A549 (cell line): ENCODE measurements at regions of chr17 and their contacts with region 1.

Region 1: DNA sequence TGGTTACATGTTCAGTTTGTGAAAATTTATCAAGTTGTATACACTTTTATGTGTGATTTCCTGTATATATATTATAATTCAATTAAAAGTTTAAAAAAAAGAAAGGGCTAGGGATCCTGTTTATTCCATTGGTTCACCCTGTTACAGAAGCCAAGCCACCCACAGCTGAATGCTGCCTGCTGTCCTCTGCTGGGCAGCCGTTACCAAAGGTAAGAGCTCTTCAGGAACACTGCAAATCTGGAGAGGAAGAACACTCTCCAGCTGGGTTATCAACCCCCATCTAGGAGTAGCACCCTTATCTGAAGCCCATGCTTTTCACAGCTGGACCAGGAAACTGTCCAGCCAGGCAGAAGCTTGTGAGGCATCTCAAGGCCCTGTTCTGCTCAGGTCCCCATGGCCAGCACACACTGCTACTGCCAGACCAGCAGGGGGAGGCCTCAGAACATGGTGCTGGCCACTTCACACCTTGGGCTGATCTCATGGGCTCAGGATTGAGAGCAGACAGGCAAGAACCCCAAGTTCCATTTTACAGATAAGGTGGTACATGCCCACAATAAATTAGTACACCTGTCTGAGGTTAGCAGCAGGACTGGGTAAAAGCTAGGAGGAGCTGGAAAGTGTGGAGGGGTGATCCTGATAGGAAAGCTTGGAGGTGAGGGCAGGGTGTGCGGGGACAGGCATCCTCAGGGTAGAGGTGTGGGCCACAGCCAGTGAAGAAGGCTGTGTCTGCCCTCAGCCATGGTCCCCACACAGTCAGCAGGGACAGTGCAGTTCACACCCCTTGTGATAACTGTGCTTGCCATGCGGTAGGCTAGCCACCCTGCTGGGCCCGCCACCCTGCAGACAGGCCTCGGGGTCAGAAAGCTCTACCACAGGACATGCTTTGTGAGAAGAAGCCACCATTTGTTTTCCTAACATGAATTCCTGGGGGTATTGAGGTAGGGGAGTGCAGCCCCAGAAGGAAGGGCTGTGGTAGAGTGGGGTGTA is 54.3 kb upstream of the SREBF1 start:
- DNase-seq: peak; percentile 88 to 91
- ATAC-seq: peak; percentile 94 to 98
- H3K4me3 ChIP-seq: no peak overlapping the region
- H3K27ac ChIP-seq: peak overlapping the region in 1 of 2 experiments; percentile 26; a peak in 3 of 6 replicates
- H3K4me1 ChIP-seq: 0 out of 3 replicates have a peak, but pooled peaks cover under 1% of the 10 kb centered on the region
- CTCF ChIP-seq: peak; percentile 94
- EP300 ChIP-seq: no peak
- POLR2A ChIP-seq: no peak
- RAD21 ChIP-seq: peak; percentile 98 to 100

Region 2: GRCh38 chr17:17636272-17636885 is 254.7 kb before region 1 on chr17:
- CTCF ChIA-PET with region 1: no interaction called
- POLR2A ChIA-PET with region 1: no interaction called
- DNase-seq: no peak
- ATAC-seq: no peak
- H3K4me3 ChIP-seq: no peak overlapping the region
- H3K27ac ChIP-seq: no peak overlapping the region
- H3K4me1 ChIP-seq: no peaks in the 10 kb centered on the region
- CTCF ChIP-seq: no peak
- EP300 ChIP-seq: no peak
- POLR2A ChIP-seq: no peak
- RAD21 ChIP-seq: no peak

Region 3: GRCh38 chr17:17868641-17869522 is 22.2 kb before region 1 on chr17:
- CTCF ChIA-PET with region 1: interaction called, 107 read pairs
- POLR2A ChIA-PET with region 1: no interaction called
- DNase-seq: no peak
- ATAC-seq: no peak
- H3K4me3 ChIP-seq: no peak overlapping the region
- H3K27ac ChIP-seq: no peak overlapping the region
- H3K4me1 ChIP-seq: peaks cover 5% of the 10 kb centered on the region; the same call in 1 of the 3 replicates
- CTCF ChIP-seq: no peak
- EP300 ChIP-seq: no peak
- POLR2A ChIP-seq: no peak
- RAD21 ChIP-seq: no peak

Region 4: GRCh38 chr17:17919169-17920107 is 28.4 kb after region 1 on chr17:
- CTCF ChIA-PET with region 1: interaction called, 313 read pairs
- POLR2A ChIA-PET with region 1: interaction called, 4 read pairs
- DNase-seq: peak; percentile 86 to 96
- ATAC-seq: peak; percentile 67 to 79
- H3K4me3 ChIP-seq: no peak overlapping the region
- H3K27ac ChIP-seq: peak overlapping the region; percentile 90 to 92
- H3K4me1 ChIP-seq: peaks cover 65% of the 10 kb centered on the region
- CTCF ChIP-seq: peak; percentile 96
- EP300 ChIP-seq: no peak
- POLR2A ChIP-seq: no peak
- RAD21 ChIP-seq: peak; percentile 99

Region 5: GRCh38 chr17:17943281-17943984 is 52.4 kb after region 1 on chr17:
- CTCF ChIA-PET with region 1: interaction called, 14 read pairs
- POLR2A ChIA-PET with region 1: no interaction called
- DNase-seq: no peak
- ATAC-seq: peak; percentile 40 to 52; a peak in 4 of 6 replicates
- H3K4me3 ChIP-seq: no peak overlapping the region
- H3K27ac ChIP-seq: peak overlapping the region; percentile 32 to 50; a peak in 4 of 6 replicates
- H3K4me1 ChIP-seq: peaks cover 61% of the 10 kb centered on the region
- CTCF ChIP-seq: no peak
- EP300 ChIP-seq: no peak
- POLR2A ChIP-seq: no peak
- RAD21 ChIP-seq: no peak

Region 6: DNA sequence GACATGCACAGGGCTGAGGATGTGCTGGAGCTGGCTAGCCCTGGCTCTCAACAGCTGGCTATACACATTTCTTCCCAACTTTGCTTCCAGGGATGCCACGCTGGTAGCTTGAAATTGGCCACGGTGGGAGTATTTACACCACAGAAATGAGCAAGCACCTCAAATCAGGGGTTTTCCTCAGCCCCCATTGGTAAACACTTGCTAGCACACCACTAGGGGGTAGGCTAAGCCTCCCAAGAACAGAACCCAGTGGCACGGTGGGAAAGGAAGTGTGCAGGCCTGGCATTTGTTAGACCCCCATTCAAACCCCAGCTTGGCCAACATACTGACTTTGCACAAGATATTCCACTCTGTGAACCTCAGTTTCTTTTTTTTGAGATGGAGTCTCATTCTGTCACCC is 94.5 kb after region 1 on chr17:
- CTCF ChIA-PET with region 1: interaction called, 18 read pairs
- POLR2A ChIA-PET with region 1: no interaction called
- DNase-seq: peak in 1 of 2 experiments; percentile 29
- ATAC-seq: peak in 1 of 2 experiments; percentile 48; a peak in 2 of 6 replicates
- H3K4me3 ChIP-seq: no peak overlapping the region
- H3K27ac ChIP-seq: peak overlapping the region in 1 of 2 experiments; percentile 33; a peak in 3 of 6 replicates
- H3K4me1 ChIP-seq: peaks cover 15% of the 10 kb centered on the region
- CTCF ChIP-seq: peak; percentile 28; the same call in 2 of the 3 replicates
- EP300 ChIP-seq: no peak
- POLR2A ChIP-seq: no peak
- RAD21 ChIP-seq: peak; percentile 28 to 65; a peak in 3 of 5 replicates

Region 7: DNA sequence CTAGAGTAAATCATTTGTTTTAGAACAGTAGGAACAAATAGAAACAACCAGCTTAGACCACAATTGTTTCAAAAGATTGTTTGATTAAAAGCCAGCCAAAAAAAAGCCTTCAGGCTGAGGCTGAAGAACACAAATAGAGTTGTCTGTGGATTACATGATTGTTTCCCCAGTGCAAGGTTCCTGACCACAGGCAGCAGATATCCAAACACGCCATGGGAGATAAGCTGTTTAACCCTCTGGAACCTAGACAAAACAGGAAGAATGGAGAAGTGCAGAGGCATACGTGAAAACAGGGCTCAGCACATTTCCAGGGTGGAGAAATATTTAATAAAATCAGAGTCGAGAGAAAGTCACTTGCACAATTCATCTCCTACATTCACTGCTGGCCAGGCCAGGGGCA is 126.9 kb after region 1 on chr17:
- CTCF ChIA-PET with region 1: interaction called, 51 read pairs
- POLR2A ChIA-PET with region 1: no interaction called
- DNase-seq: no peak
- ATAC-seq: no peak
- H3K4me3 ChIP-seq: no peak overlapping the region
- H3K27ac ChIP-seq: no peak overlapping the region
- H3K4me1 ChIP-seq: no peaks in the 10 kb centered on the region
- CTCF ChIP-seq: no peak
- EP300 ChIP-seq: no peak
- POLR2A ChIP-seq: no peak
- RAD21 ChIP-seq: no peak

Region 8: GRCh38 chr17:18070861-18071340 is 179.8 kb after region 1 on chr17:
- CTCF ChIA-PET with region 1: interaction called, 12 read pairs
- POLR2A ChIA-PET with region 1: no interaction called
- DNase-seq: no peak
- ATAC-seq: peak in 1 of 2 experiments; percentile 51; a peak in 2 of 6 replicates
- H3K4me3 ChIP-seq: no peak overlapping the region
- H3K27ac ChIP-seq: no peak overlapping the region
- H3K4me1 ChIP-seq: peaks cover 12% of the 10 kb centered on the region; the same call in 1 of the 3 replicates
- CTCF ChIP-seq: no peak
- EP300 ChIP-seq: no peak
- POLR2A ChIP-seq: no peak
- RAD21 ChIP-seq: no peak